Endothelial cell of umbilical vein (primary cell): ENCODE measurements at regions of chr7 and their contacts with region 1.

Region 1: DNA sequence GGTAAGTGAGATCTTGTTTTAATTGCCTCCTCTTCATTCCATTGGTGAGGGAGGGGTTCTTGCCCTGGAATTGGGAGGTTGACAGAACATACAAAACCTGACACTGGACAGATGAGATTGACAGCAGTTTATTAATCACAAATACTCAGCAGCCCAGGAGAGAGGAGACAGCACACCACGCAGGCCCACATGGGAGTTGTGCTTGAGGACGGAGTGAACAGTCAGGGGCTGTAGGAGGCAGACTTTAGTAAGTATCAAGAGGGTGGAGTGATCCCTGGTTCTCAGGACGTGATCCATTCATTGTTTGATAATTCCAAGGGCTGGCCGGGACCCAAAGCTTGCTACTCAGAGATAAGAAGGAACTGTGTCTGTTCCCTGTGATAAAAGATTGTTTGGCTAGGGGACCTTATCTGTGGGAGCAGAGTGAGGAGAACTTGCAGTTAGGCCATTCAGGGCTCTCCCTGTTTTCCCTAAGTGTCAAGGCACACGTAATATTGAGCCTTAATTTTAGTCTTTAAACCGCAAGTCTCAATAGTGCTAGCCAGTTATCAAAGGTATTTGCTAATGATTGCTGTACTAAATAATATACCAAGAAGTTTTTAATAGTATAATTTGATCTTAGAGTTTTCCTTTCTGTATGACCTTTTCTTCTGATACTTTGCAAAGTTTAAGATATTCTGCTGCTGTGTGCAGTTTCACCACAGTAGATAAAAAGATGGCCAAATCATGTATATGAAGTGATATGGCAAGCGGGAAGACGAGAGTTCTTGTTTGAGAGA is 14.5 kb downstream of the CAPZA2 start:
- DNase-seq: peak; percentile 99
- H3K4me3 ChIP-seq: peak overlapping the region in 1 of 3 experiments; percentile 27
- H3K27ac ChIP-seq: peak overlapping the region; percentile 65
- H3K4me1 ChIP-seq: peaks cover 69% of the 10 kb centered on the region
- H3K27me3 ChIP-seq: no peaks in the 10 kb centered on the region
- CTCF ChIP-seq: peak; percentile 18 to 27
- POLR2A ChIP-seq: peak; percentile 90

Region 2: DNA sequence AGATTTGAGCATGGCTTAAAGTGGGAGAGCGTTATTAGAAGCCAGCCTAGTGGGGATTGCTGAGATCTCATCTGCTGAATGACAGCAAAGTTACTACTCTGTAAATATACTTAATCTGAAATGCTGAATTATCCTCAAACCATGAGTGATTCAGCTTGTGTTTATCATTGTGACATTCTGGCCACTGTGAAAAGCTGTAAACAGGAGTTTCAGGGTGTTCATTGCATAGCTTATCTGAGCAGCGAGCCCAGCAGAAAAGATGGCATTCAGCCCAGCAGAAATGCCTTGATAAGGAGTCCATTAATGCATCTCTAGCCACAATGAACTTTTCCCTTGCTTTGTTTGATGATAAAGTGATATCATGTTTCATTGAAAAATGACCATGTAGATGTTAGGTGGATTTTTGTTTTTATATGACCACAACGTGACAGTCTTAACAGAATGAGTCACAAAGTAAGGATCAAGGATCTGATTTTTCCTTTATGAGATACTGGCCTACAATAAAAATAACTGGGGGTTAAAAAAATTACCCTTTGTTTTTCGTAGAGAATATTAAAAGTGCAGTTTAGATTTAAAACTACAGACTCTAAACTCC is 658.7 kb before region 1 on chr7:
- CTCF ChIA-PET with region 1: no interaction called
- POLR2A ChIA-PET with region 1: no interaction called
- dilution Hi-C with region 1: no loop called
- intact Hi-C with region 1: loop called (anchors 5 kb)
- DNase-seq: peak; percentile 97
- H3K4me3 ChIP-seq: peak overlapping the region in 1 of 3 experiments; percentile 28
- H3K27ac ChIP-seq: peak overlapping the region; percentile 96
- H3K4me1 ChIP-seq: peaks cover 56% of the 10 kb centered on the region
- H3K27me3 ChIP-seq: no peaks in the 10 kb centered on the region
- CTCF ChIP-seq: no peak
- POLR2A ChIP-seq: no peak

Region 3: DNA sequence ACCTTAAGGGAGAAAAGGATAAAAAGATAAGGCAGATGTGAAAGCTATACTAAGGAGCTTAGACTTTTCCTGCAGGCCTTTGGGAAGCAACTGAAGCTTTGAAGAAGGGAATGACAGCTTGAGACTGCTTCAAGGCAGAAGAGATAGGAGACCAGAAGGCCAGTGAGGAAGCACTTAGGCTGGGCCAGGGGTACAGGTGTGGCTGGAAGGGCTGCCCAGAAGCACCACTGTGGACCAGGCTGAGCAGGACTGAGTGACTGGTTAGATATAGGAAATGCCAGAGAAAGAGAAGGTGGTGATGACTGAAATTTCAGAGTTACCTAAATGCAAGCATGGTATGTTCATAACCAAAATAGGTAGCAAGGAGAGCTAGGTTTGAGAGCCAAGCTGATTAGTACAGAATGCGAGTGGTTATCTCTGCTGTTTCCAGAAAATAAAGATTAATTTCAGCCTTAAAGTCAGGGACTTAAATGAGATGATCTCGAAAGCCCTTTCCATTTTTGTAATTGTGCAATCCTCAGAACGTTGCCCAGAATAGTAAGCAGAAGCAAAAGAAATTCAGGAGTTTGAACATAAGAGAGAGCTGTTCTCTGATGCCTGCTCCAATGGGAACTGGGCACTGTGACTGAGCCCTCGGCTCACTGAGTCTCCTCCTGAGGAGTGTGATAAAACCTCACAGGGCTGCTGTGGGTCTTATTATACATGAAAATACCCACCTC is 150.0 kb before region 1 on chr7:
- CTCF ChIA-PET with region 1: no interaction called
- POLR2A ChIA-PET with region 1: no interaction called
- dilution Hi-C with region 1: no loop called
- intact Hi-C with region 1: no loop called
- DNase-seq: no peak
- H3K4me3 ChIP-seq: no peak overlapping the region
- H3K27ac ChIP-seq: no peak overlapping the region
- H3K4me1 ChIP-seq: peaks cover 17% of the 10 kb centered on the region
- H3K27me3 ChIP-seq: no peaks in the 10 kb centered on the region
- CTCF ChIP-seq: no peak
- POLR2A ChIP-seq: no peak

Region 4: DNA sequence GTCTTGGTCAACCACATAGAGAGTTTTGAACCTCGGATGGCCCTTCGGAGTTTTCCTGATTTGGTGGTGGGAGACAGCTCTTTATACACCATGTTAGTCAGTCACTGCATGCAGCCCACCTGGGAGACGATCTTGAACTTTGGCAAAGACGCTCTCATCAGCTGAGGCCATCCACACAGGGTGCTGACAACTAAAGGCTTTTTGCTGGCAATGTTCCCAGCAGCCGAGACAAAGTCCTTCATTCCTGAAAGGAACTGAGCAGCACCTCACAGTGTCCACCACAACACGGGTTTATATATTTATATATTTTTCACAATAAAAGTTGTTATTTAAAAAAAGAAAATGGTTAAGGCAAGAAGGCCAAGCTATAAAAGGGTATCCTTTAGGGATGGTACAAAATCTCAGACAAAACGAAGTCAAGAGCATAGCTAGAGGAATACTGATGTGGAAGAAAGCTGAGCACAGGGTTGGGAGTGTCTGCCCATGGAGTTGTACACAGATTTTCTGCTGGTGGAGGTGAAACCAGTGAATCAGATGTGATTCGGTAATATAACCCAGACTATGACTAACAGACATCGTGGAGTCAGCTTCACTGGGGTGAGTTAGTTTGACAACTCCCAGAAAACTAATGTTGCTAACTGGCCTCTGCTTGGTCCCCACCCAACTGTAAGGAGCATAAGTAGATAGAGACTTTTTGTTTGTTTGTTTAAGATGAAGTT is 41.9 kb before region 1 on chr7:
- CTCF ChIA-PET with region 1: no interaction called
- POLR2A ChIA-PET with region 1: no interaction called
- dilution Hi-C with region 1: no loop called
- intact Hi-C with region 1: no loop called
- DNase-seq: no peak
- H3K4me3 ChIP-seq: no peak overlapping the region
- H3K27ac ChIP-seq: no peak overlapping the region
- H3K4me1 ChIP-seq: no peaks in the 10 kb centered on the region
- H3K27me3 ChIP-seq: no peaks in the 10 kb centered on the region
- CTCF ChIP-seq: no peak
- POLR2A ChIP-seq: no peak

Region 5: DNA sequence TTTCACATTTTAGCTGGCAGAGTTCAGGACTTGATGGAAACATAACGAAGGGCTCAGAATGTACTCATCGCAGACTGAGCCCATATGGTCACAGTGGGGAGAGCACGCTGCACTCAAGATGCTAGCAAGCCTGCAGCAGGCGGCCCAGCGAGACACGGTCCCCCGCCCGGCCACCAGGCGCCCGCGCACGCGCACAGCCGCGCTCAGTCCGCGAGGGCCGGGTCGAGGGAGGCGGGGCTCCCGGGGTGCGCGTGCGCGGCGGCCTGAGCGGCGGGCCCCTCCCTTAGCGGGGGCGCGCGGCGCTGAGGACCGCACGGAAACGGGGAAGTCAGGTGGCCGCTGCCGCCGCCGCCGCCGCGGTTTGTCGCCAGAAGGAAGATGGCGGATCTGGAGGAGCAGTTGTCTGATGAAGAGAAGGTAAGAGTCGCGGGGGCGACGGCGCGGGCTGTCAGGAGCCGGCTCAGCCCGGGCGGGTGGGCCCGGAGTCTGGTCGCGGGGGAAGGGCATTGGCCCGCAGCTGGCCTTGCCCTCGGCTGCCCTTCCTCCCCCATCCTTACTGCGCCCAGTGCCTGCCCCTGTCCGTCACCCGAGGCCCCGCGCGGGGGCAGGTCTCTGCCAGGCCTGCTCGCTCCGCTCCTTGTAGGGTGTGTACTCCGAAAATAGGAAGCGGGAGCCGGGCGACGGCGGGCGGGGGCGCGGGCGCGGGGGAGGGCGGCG is 14.5 kb before region 1 on chr7 and contains the start of gene CAPZA2:
- CTCF ChIA-PET with region 1: interaction called, 4 read pairs
- POLR2A ChIA-PET with region 1: interaction called, 3 read pairs
- dilution Hi-C with region 1: no loop called
- intact Hi-C with region 1: loop called (anchors 1 kb)
- DNase-seq: peak; percentile 93
- H3K4me3 ChIP-seq: peak within 1 kb of the TSS; percentile 55 to 95 (median 92)
- H3K27ac ChIP-seq: peak within 1 kb of the TSS; percentile 65
- H3K4me1 ChIP-seq: peaks cover 19% of the 10 kb centered on the region
- H3K27me3 ChIP-seq: no peaks in the 10 kb centered on the region
- CTCF ChIP-seq: peak in 1 of 2 donors; percentile 34
- POLR2A ChIP-seq: peak; percentile 80
- total RNA-seq, gene CAPZA2: 343 and 347 TPM in 2 replicates

Region 6: DNA sequence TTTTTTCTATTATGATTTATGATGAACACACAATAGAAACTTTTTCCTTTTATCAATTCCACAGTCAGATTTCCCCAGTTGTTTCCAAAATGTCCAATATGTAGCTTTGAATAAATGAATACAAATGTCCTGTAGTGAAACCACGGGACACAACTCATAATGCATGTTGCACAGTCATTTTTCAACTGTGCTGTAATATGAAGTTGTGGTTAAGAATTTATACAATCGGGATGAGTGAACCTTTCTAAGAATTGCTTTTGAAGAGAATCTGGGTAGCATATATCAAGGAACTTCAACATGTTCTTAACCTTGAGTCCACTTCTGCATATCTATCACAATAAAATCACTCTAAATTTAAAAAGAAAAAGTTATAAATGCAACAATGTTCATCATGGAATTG is 61.8 kb after region 1 on chr7:
- CTCF ChIA-PET with region 1: no interaction called
- POLR2A ChIA-PET with region 1: no interaction called
- dilution Hi-C with region 1: no loop called
- intact Hi-C with region 1: no loop called
- DNase-seq: no peak
- H3K4me3 ChIP-seq: no peak overlapping the region
- H3K27ac ChIP-seq: no peak overlapping the region
- H3K4me1 ChIP-seq: no peaks in the 10 kb centered on the region
- H3K27me3 ChIP-seq: peaks cover 3 to 4% of the 10 kb centered on the region in 2 experiments
- CTCF ChIP-seq: no peak
- POLR2A ChIP-seq: no peak

Region 7: GRCh38 chr7:117025891-117026290 is 149.0 kb after region 1 on chr7:
- CTCF ChIA-PET with region 1: no interaction called
- POLR2A ChIA-PET with region 1: no interaction called
- dilution Hi-C with region 1: no loop called
- intact Hi-C with region 1: loop called (anchors 5 kb)
- DNase-seq: peak; percentile 83
- H3K4me3 ChIP-seq: peak overlapping the region in 1 of 3 experiments; percentile 27
- H3K27ac ChIP-seq: peak overlapping the region; percentile 75
- H3K4me1 ChIP-seq: peaks cover 22% of the 10 kb centered on the region
- H3K27me3 ChIP-seq: no peaks in the 10 kb centered on the region
- CTCF ChIP-seq: no peak
- POLR2A ChIP-seq: no peak